Calu3 (cell line): ENCODE measurements at regions of chr10 and their contacts with region 1.

Region 1: GRCh38 chr10:62095181-62096071 is 173.2 kb downstream of the RTKN2 start:
- DNase-seq: peak; percentile 54
- H3K4me3 Mint-ChIP-seq: peak overlapping the region; percentile 67
- H3K27ac Mint-ChIP-seq: peak overlapping the region; percentile 100
- H3K4me1 Mint-ChIP-seq: peaks cover 64% of the 10 kb centered on the region
- H3K27me3 Mint-ChIP-seq: no peaks in the 10 kb centered on the region
- CTCF ChIP-seq: no peak

Region 2: GRCh38 chr10:62076891-62077290 is 18.5 kb before region 1 on chr10:
- CTCF ChIA-PET with region 1: interaction called, 3 read pairs
- intact Hi-C with region 1: loop called (anchors 2 kb)
- DNase-seq: peak; percentile 29
- H3K4me3 Mint-ChIP-seq: peak overlapping the region; percentile 19
- H3K27ac Mint-ChIP-seq: peak overlapping the region; percentile 45
- H3K4me1 Mint-ChIP-seq: peaks cover 26% of the 10 kb centered on the region
- H3K27me3 Mint-ChIP-seq: no peaks in the 10 kb centered on the region
- CTCF ChIP-seq: no peak

Region 3: DNA sequence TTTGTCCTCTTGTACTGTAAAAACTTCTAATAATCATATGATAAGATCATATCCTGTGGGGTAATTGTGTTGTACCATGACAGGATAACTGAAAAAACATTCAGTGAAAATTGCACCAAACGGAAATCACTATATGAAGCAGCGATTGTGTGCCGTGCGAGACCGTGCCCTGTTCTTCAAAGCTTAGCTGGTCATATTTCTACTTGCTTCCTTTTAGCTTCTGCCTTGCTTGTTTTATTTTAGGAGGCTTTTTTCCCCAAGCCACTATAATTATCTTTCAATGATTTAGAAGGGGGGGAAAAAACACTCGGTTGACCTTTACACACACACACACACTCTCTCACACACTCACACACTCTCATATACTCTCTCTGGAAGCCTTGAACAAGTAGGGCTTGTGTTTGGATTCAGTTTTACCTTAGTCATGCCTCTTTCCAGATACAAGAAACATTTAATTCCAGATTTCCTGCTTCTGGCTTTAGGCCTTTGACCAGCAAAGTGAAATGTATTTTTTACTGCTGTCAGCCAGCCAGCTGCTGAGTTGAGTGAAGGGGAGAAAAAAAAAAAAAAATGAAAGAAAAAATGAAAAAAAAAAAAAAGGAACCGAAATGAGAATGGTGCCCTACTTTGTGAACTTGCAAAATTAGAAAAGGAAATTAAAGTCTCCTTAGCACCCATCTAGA is 12.6 kb before region 1 on chr10:
- CTCF ChIA-PET with region 1: interaction called, 10 read pairs
- intact Hi-C with region 1: no loop called
- DNase-seq: peak; percentile 21
- H3K4me3 Mint-ChIP-seq: peak overlapping the region; percentile 27
- H3K27ac Mint-ChIP-seq: peak overlapping the region; percentile 89
- H3K4me1 Mint-ChIP-seq: peaks cover 47% of the 10 kb centered on the region
- H3K27me3 Mint-ChIP-seq: no peaks in the 10 kb centered on the region
- CTCF ChIP-seq: no peak

Region 4: DNA sequence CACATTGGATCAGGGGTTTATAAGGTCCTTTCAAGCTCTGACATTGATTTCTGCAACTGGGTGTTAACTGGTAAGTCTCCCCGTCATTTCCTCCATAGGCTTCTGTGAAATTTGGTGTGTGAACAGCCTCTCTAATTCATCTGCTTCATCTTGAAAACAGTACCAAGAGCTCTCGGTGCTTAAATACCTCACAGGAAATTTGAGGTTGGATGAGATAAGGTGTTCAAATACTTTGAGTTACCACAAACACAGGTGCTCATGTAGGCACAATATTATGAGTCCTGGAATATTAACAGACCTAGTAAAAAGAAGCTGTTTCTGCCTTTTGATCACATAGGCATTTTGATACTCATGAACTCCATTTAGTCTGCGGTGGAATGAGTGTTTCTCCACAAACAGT is 88.0 kb after region 1 on chr10:
- CTCF ChIA-PET with region 1: no interaction called
- intact Hi-C with region 1: loop called (anchors 5 kb)
- DNase-seq: no peak
- H3K4me3 Mint-ChIP-seq: no peak overlapping the region
- H3K27ac Mint-ChIP-seq: no peak overlapping the region
- H3K4me1 Mint-ChIP-seq: peaks cover 9% of the 10 kb centered on the region
- H3K27me3 Mint-ChIP-seq: no peaks in the 10 kb centered on the region
- CTCF ChIP-seq: no peak